H1 (cell line): ENCODE measurements at regions of chr12 and their contacts with region 1.

Region 1: DNA sequence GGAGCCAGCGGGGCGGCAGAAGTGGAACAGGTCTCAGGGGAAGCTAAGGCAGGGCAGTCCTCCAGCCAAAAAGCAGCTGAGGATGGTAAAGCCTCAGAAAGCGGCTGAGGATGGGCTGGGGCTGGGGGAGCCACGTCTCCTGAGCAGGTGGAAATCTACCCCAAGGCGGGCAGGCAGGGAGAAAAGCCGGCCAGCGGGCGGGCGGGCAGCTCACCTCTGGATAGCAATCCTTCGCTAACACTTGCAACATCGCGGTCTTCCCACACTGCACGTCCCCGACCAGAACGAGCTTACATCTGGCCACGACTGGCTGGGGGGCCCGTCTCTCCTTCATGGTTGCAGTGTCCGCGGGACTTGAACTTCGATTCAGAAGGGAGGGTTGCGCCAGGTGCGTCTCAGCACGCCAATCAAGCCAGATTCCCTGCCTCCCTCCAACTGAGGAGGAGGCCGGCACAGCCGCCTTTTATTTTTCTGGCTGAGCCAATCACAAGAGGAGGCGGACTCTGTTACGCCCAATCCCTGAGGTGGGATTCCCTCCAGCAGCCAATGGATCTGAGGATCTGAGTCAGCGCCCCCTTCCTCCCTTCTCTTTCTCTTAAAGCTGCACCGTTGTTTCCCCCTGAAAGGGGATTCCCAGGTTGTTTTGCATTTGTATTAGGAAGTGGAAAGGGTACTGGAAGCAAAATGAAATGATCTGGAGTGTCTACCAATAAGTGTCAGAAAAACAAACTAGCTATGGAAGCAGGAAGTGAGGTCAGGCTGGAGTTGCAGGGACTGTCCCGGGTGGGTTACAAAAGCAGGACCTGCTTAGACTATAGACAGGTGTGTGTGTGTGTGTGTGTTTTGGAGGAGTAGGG is at the start of gene RND1:
- DNase-seq: peak; percentile 91 to 94
- H3K4me3 ChIP-seq: peak within 1 kb of the TSS; percentile 66 to 90 (median 76)
- H3K27ac ChIP-seq: peak within 1 kb of the TSS; percentile 82
- H3K4me1 ChIP-seq: peaks cover 7 to 26% (median 18%) of the 10 kb centered on the region in 4 experiments
- H3K27me3 ChIP-seq: no peaks in the 10 kb centered on the region
- CTCF ChIP-seq: peak in 1 of 3 experiments; percentile 16; a peak in 1 of 4 replicates
- EP300 ChIP-seq: no peak
- POLR2A ChIP-seq: peak; percentile 100
- RAD21 ChIP-seq: no peak
- total RNA-seq, gene RND1: 15.8 and 16.2 TPM in 2 replicates

Region 2: GRCh38 chr12:48824112-48824511 is 41.5 kb before region 1 on chr12:
- CTCF ChIA-PET with region 1: interaction called, 7 read pairs
- POLR2A ChIA-PET with region 1: interaction called, 47 read pairs
- DNase-seq: no peak
- H3K4me3 ChIP-seq: no peak overlapping the region
- H3K27ac ChIP-seq: no peak overlapping the region
- H3K4me1 ChIP-seq: peaks cover 0 to 13% (median 7%) of the 10 kb centered on the region in 4 experiments; a peak in 4 of 7 replicates
- H3K27me3 ChIP-seq: peaks cover 0 to 13% (median 6%) of the 10 kb centered on the region in 4 experiments; a peak in 5 of 7 replicates
- CTCF ChIP-seq: no peak
- EP300 ChIP-seq: no peak
- POLR2A ChIP-seq: no peak
- RAD21 ChIP-seq: no peak

Region 3: DNA sequence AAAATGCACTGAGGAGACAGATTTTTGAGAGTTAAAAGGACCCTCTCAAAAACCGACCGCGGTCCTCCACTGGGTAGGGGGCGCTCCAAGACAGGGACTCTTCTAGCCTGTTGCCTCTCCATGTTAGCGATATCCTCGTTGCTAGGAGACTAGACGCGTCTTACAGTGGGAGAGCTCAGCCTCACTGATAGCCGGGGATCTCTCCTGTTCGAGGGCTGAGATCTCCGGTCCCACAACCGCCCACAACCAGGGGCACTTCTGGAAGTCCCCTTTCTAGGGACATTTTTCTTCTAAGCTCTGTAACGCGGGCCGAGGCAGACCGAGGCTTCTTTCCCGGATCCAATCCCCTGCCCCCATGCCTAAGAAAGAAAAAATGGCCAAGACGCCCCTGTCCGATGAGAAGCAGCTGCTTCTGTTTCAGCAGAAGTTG is 38.3 kb after region 1 on chr12:
- CTCF ChIA-PET with region 1: interaction called, 10 read pairs
- POLR2A ChIA-PET with region 1: interaction called, 15 read pairs
- DNase-seq: peak in 1 of 2 experiments; percentile 95
- H3K4me3 ChIP-seq: peak overlapping the region; percentile 13 to 59 (median 53); a peak in 7 of 8 replicates
- H3K27ac ChIP-seq: no peak overlapping the region
- H3K4me1 ChIP-seq: 0 out of 7 replicates have a peak, but pooled peaks cover 0 to 2% (median 0%) of the 10 kb centered on the region in 4 experiments
- H3K27me3 ChIP-seq: no peaks in the 10 kb centered on the region
- CTCF ChIP-seq: peak; percentile 75 to 77 (median 76)
- EP300 ChIP-seq: no peak
- POLR2A ChIP-seq: no peak
- RAD21 ChIP-seq: peak in 1 of 2 experiments; percentile 35; a peak in 2 of 4 replicates

Region 4: DNA sequence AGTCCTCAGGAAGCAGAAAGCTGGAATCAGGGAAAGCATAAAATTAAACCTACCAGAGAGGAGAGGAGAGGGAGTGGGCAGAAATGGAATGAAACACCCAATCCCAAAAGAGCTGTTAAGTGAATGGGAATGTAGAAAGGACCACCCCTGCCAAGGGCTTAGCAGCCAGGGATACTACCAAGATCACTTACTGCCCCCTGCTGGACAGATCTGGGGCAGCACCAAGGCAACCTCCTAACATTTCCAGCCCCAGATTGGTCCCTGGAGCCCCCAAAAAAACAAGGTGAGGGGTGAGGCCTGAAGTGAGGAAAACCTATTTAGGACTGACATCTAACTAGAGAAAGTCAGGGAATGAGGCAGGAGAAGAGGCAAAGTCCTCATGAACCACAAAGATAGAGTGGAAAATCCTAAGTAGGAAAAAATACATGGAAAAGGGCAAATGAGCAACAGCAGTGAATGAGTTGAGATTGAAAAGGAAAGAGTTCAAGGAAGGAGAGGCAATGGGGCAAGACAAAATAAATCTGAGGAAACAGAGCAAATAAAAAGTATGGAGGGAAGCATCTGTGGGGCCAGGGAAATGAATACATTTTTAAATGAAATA is 70.8 kb after region 1 on chr12:
- CTCF ChIA-PET with region 1: interaction called, 5 read pairs
- POLR2A ChIA-PET with region 1: interaction called, 17 read pairs
- DNase-seq: peak; percentile 63 to 97
- H3K4me3 ChIP-seq: no peak overlapping the region
- H3K27ac ChIP-seq: no peak overlapping the region
- H3K4me1 ChIP-seq: no peaks in the 10 kb centered on the region
- H3K27me3 ChIP-seq: no peaks in the 10 kb centered on the region
- CTCF ChIP-seq: peak; percentile 84 to 97 (median 93)
- EP300 ChIP-seq: no peak
- POLR2A ChIP-seq: no peak
- RAD21 ChIP-seq: peak; percentile 67 to 72

Region 5: GRCh38 chr12:48969833-48970701 is 104.4 kb after region 1 on chr12:
- CTCF ChIA-PET with region 1: interaction called, 5 read pairs
- POLR2A ChIA-PET with region 1: interaction called, 12 read pairs
- DNase-seq: peak in 1 of 2 experiments; percentile 69
- H3K4me3 ChIP-seq: peak overlapping the region; percentile 11 to 56 (median 32); a peak in 7 of 8 replicates
- H3K27ac ChIP-seq: no peak overlapping the region
- H3K4me1 ChIP-seq: peaks cover 28 to 49% (median 42%) of the 10 kb centered on the region in 4 experiments
- H3K27me3 ChIP-seq: peaks cover 48 to 81% (median 79%) of the 10 kb centered on the region in 4 experiments
- CTCF ChIP-seq: peak in 1 of 3 experiments; percentile 8; a peak in 1 of 4 replicates
- EP300 ChIP-seq: no peak
- POLR2A ChIP-seq: no peak
- RAD21 ChIP-seq: no peak